Activated naive CD4-positive, alpha-beta T cell treated with anti-CD3 and anti-CD28 coated beads for 36 hours (primary cell): ENCODE measurements at regions of chr11 and their contacts with region 1.

Region 1: GRCh38 chr11:102293873-102294601 is 23.2 kb upstream of the BIRC3 start:
- DNase-seq: peak; percentile 35
- H3K4me3 Mint-ChIP-seq: peak overlapping the region; percentile 74
- H3K27ac Mint-ChIP-seq: peak overlapping the region; percentile 85
- H3K4me1 Mint-ChIP-seq: peaks cover 21% of the 10 kb centered on the region
- H3K27me3 Mint-ChIP-seq: no peaks in the 10 kb centered on the region

Region 2: GRCh38 chr11:102237096-102237735 is 56.8 kb before region 1 on chr11:
- CTCF ChIA-PET with region 1: no interaction called
- intact Hi-C with region 1: no loop called
- DNase-seq: no peak
- H3K4me3 Mint-ChIP-seq: no peak overlapping the region
- H3K27ac Mint-ChIP-seq: no peak overlapping the region
- H3K4me1 Mint-ChIP-seq: peaks cover 2% of the 10 kb centered on the region
- H3K27me3 Mint-ChIP-seq: peaks cover 15% of the 10 kb centered on the region

Region 3: DNA sequence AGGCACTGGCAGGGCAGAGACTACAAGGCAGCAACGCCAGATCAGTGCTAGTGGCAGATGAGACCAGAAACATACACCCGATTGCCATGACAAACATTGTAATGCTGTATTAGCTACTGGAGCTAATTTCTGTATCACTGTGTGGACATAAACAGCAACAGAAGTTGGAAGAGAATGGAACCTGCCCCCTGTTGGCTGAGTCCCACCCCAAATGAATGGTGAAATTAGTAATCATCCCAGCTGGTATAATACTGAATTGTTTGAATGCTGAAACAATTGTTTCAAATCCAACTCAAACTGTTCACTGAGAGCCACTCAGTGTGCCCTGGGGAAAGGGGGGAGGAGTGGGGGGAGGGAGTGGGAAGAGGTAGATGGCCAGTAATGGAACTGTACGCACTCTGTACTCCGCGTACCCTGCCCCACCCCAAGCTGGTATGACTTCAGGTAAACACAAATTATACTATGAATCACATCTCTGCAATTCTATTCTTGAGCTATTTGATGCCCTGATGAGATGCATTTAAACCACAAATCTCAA is 12.1 kb after region 1 on chr11:
- CTCF ChIA-PET with region 1: interaction called, 180 read pairs
- intact Hi-C with region 1: loop called (anchors 1 kb)
- DNase-seq: peak; percentile 37
- H3K4me3 Mint-ChIP-seq: peak overlapping the region; percentile 36
- H3K27ac Mint-ChIP-seq: peak overlapping the region; percentile 74
- H3K4me1 Mint-ChIP-seq: peaks cover 59% of the 10 kb centered on the region
- H3K27me3 Mint-ChIP-seq: no peaks in the 10 kb centered on the region

Region 4: GRCh38 chr11:102599642-102600261 is 305.7 kb after region 1 on chr11:
- CTCF ChIA-PET with region 1: no interaction called
- intact Hi-C with region 1: loop called (anchors 5 kb)
- DNase-seq: peak; percentile 43
- H3K4me3 Mint-ChIP-seq: no peak overlapping the region
- H3K27ac Mint-ChIP-seq: peak overlapping the region; percentile 75
- H3K4me1 Mint-ChIP-seq: peaks cover 27% of the 10 kb centered on the region
- H3K27me3 Mint-ChIP-seq: no peaks in the 10 kb centered on the region